Activated CD4-positive, alpha-beta T cell treated with anti-CD3 and anti-CD28 coated beads for 36 hours (primary cell): ENCODE measurements at regions of chr11 and their contacts with region 1.

Region 1: DNA sequence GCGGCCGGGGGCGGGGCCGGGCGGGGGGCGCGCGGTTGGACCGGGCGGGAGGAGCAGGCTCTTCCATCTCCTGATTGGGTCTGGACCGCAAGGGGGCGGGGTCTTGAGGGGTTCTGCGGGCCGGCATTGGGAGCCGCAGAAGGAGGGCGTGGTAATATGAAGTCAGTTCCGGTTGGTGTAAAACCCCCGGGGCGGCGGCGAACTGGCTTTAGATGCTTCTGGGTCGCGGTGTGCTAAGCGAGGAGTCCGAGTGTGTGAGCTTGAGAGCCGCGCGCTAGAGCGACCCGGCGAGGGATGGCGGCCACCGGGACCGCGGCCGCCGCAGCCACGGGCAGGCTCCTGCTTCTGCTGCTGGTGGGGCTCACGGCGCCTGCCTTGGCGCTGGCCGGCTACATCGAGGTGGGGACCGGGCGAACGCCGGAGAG is at the start of gene APLP2:
- DNase-seq: peak; percentile 99
- ATAC-seq: peak; percentile 96
- H3K4me3 Mint-ChIP-seq: peak within 1 kb of the TSS; percentile 84
- H3K27ac Mint-ChIP-seq: peak within 1 kb of the TSS; percentile 91
- H3K4me1 Mint-ChIP-seq: peaks cover 22% of the 10 kb centered on the region
- H3K27me3 Mint-ChIP-seq: peaks cover 6% of the 10 kb centered on the region
- total RNA-seq, gene APLP2: 34.6 to 40.2 TPM

Region 2: GRCh38 chr11:129895126-129896041 is 174.3 kb before region 1 on chr11 and contains the start of gene NFRKB:
- CTCF ChIA-PET with region 1: interaction called, 4 read pairs
- POLR2A ChIA-PET with region 1: no interaction called
- intact Hi-C with region 1: loop called in 1 of 2 experiments (anchors 1 kb)
- DNase-seq: peak; percentile 94
- ATAC-seq: peak; percentile 99
- H3K4me3 Mint-ChIP-seq: peak within 1 kb of the TSS; percentile 84
- H3K27ac Mint-ChIP-seq: peak within 1 kb of the TSS; percentile 71
- H3K4me1 Mint-ChIP-seq: peaks cover 41% of the 10 kb centered on the region
- H3K27me3 Mint-ChIP-seq: no peaks in the 10 kb centered on the region
- total RNA-seq, gene NFRKB: 27.3 to 31.0 TPM

Region 3: GRCh38 chr11:129992161-129992944 is 77.3 kb before region 1 on chr11:
- CTCF ChIA-PET with region 1: interaction called, 3 read pairs
- POLR2A ChIA-PET with region 1: no interaction called
- intact Hi-C with region 1: loop called in 1 of 2 experiments (anchors 2 kb)
- DNase-seq: peak; percentile 73
- ATAC-seq: peak; percentile 97
- H3K4me3 Mint-ChIP-seq: no peak overlapping the region
- H3K27ac Mint-ChIP-seq: no peak overlapping the region
- H3K4me1 Mint-ChIP-seq: peaks cover 11% of the 10 kb centered on the region
- H3K27me3 Mint-ChIP-seq: no peaks in the 10 kb centered on the region

Region 4: GRCh38 chr11:130124096-130124495 is 54.4 kb after region 1 on chr11:
- CTCF ChIA-PET with region 1: interaction called, 3 read pairs
- POLR2A ChIA-PET with region 1: no interaction called
- intact Hi-C with region 1: loop called (anchors 2 kb)
- DNase-seq: no peak
- ATAC-seq: no peak
- H3K4me3 Mint-ChIP-seq: no peak overlapping the region
- H3K27ac Mint-ChIP-seq: no peak overlapping the region
- H3K4me1 Mint-ChIP-seq: peaks cover 34% of the 10 kb centered on the region
- H3K27me3 Mint-ChIP-seq: peaks cover 4% of the 10 kb centered on the region

Region 5: GRCh38 chr11:130243816-130244215 is 174.1 kb after region 1 on chr11:
- CTCF ChIA-PET with region 1: no interaction called
- POLR2A ChIA-PET with region 1: no interaction called
- intact Hi-C with region 1: no loop called
- DNase-seq: no peak
- ATAC-seq: no peak
- H3K4me3 Mint-ChIP-seq: no peak overlapping the region
- H3K27ac Mint-ChIP-seq: peak overlapping the region; percentile 48
- H3K4me1 Mint-ChIP-seq: peaks cover 22% of the 10 kb centered on the region
- H3K27me3 Mint-ChIP-seq: no peaks in the 10 kb centered on the region

Region 6: DNA sequence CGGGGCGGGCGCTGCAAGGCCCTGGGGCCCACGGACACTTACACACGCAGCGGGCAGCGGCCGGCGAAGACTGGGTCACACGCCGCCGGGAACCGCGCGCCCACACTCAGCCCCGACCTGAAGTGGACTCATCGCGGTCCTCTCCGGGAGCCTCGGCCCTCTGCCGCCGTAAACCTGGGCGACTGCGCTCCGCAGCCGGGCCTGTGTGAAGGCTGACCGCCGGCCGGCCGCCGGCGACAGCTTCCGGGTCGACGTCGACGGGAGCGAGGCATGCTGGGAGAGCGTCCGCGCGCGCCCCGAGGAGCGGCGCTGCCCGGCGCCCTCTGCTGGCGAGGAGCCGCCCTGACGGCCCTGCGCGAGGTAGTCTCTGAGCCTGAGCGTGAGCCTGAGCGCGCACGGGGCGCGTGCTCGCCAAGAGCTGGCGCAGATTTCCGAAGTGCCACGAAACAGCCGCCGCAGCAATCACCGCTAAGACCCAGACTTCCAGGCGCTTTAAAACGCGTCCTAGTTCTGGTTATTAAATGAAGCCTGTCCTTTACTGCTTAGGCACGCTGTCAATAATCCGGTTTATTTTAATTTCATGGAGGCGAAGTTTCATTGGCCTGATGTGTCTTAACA is 846.7 kb after region 1 on chr11 and contains the start of gene SNX19:
- CTCF ChIA-PET with region 1: no interaction called
- POLR2A ChIA-PET with region 1: no interaction called
- intact Hi-C with region 1: loop called in 1 of 2 experiments (anchors 5 kb)
- DNase-seq: peak; percentile 94
- ATAC-seq: peak; percentile 100
- H3K4me3 Mint-ChIP-seq: peak within 1 kb of the TSS; percentile 78
- H3K27ac Mint-ChIP-seq: peak within 1 kb of the TSS; percentile 84
- H3K4me1 Mint-ChIP-seq: peaks cover 32% of the 10 kb centered on the region
- H3K27me3 Mint-ChIP-seq: peaks cover 4% of the 10 kb centered on the region
- total RNA-seq, gene SNX19: 22.7 to 29.5 TPM

Region 7: GRCh38 chr11:131178596-131178995 is 1108.9 kb after region 1 on chr11:
- CTCF ChIA-PET with region 1: no interaction called
- POLR2A ChIA-PET with region 1: no interaction called
- intact Hi-C with region 1: no loop called
- DNase-seq: no peak
- ATAC-seq: no peak
- H3K4me3 Mint-ChIP-seq: no peak overlapping the region
- H3K27ac Mint-ChIP-seq: no peak overlapping the region
- H3K4me1 Mint-ChIP-seq: no peaks in the 10 kb centered on the region
- H3K27me3 Mint-ChIP-seq: peaks cover 10% of the 10 kb centered on the region